ENCODE measurements at regions of chr12 and their contacts with region 1.

Region 1: DNA sequence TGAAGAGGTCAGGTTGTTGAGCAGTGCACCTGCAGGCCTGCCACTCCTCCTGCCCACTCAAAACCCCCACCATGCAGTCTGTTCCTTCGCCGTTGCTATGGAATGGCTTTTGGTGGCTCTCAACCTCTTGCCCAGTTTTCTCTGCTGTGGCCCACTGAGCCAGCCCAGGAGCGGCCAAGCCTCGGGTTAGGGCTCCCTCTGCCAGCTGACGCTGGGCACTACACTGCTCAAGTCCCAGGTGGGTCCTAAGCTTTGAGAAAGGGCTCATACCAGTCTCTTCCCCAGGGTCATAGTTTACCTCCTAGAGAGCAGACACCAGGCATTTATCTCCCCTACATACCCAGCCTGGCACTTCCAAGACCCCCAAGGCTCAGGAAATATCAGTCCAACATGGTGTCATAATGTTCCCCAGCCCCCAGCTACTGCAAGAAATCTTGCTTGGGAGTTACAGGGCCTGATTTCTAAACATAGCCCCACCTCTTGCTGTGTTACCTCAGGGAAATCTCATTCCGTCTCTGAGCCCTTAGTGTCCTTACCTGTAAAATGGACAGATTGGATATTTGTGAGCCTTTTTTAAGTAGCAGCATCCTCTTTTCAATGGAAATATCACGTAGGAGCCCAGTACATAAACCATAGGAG is 59.4 kb downstream of the TSPAN11 start:
- DNase-seq: peak in 2 of 5 donors; percentile 38 to 70
- H3K4me3 ChIP-seq: no peak overlapping the region
- H3K27ac ChIP-seq: no peak overlapping the region
- H3K4me1 ChIP-seq: no peaks in the 10 kb centered on the region
- H3K27me3 ChIP-seq: no peaks in the 10 kb centered on the region
- CTCF ChIP-seq: no peak
- EP300 ChIP-seq: no peak
- POLR2A ChIP-seq: no peak

Region 2: GRCh38 chr12:30882706-30883105 is 103.2 kb before region 1 on chr12:
- intact Hi-C with region 1: loop called in 1 of 4 experiments (anchors 10 kb)
- DNase-seq: no peak
- H3K4me3 ChIP-seq: no peak overlapping the region
- H3K27ac ChIP-seq: no peak overlapping the region
- H3K4me1 ChIP-seq: no peaks in the 10 kb centered on the region
- H3K27me3 ChIP-seq: no peaks in the 10 kb centered on the region
- CTCF ChIP-seq: no peak
- EP300 ChIP-seq: no peak
- POLR2A ChIP-seq: no peak

Measured in ovary (tissue), 10 donors.